ENCODE measurements at regions of chr1 and their contacts with region 1.

Region 1: GRCh38 chr1:201895913-201896807 is 7.5 kb downstream of the SHISA4 start:
- DNase-seq: peak; percentile 88 to 94
- ATAC-seq: peak; percentile 91 to 96
- H3K4me3 ChIP-seq: no peak overlapping the region
- H3K27ac ChIP-seq: peak overlapping the region; percentile 60 to 73; a peak in 5 of 6 replicates
- H3K4me1 ChIP-seq: peaks cover 3% of the 10 kb centered on the region; the same call in 1 of the 3 replicates
- CTCF ChIP-seq: peak; percentile 98
- EP300 ChIP-seq: no peak
- POLR2A ChIP-seq: no peak
- RAD21 ChIP-seq: peak; percentile 99

Region 2: GRCh38 chr1:201678264-201679101 is 217.7 kb before region 1 on chr1:
- CTCF ChIA-PET with region 1: no interaction called
- POLR2A ChIA-PET with region 1: no interaction called
- DNase-seq: no peak
- ATAC-seq: no peak
- H3K4me3 ChIP-seq: no peak overlapping the region
- H3K27ac ChIP-seq: no peak overlapping the region
- H3K4me1 ChIP-seq: peaks cover 25% of the 10 kb centered on the region
- CTCF ChIP-seq: no peak
- EP300 ChIP-seq: no peak
- POLR2A ChIP-seq: no peak
- RAD21 ChIP-seq: no peak

Region 3: GRCh38 chr1:201859424-201859823 is 36.7 kb before region 1 on chr1:
- CTCF ChIA-PET with region 1: interaction called, 19 read pairs
- POLR2A ChIA-PET with region 1: no interaction called
- DNase-seq: no peak
- ATAC-seq: no peak
- H3K4me3 ChIP-seq: no peak overlapping the region
- H3K27ac ChIP-seq: no peak overlapping the region
- H3K4me1 ChIP-seq: no peaks in the 10 kb centered on the region
- CTCF ChIP-seq: no peak
- EP300 ChIP-seq: no peak
- POLR2A ChIP-seq: no peak
- RAD21 ChIP-seq: no peak

Region 4: DNA sequence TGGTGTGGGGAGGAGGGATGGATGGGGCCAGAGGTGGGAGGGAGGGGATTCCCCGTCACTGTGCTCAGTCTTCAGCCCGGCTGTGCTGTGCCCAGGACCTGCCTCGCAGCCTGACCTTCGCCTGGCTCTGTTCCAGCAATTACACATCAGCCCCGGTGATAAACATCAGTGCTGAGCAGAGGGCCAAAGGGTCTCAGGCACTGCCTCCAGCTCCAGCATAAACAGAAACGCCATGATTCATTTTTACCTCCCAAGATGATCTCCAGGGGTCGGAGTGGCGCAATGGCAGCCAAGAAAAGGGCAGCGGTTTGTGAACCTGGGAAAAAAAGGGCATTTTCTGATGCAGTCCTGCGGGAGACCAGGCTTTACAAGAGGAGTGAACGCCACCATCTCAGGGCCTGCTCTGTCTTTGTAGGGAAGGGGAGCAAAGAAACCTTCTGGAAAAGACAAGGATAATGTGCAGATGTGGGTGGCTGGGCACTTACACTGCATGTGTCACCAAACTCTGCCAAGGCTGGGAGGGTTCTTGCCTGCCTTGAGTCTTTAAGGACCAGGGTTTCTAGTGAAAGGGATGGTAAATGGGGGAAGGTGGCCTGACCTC is 20.6 kb after region 1 on chr1:
- CTCF ChIA-PET with region 1: interaction called, 303 read pairs
- POLR2A ChIA-PET with region 1: no interaction called
- DNase-seq: peak; percentile 67 to 85
- ATAC-seq: peak; percentile 85 to 86
- H3K4me3 ChIP-seq: no peak overlapping the region
- H3K27ac ChIP-seq: peak overlapping the region; percentile 73 to 82
- H3K4me1 ChIP-seq: peaks cover 26% of the 10 kb centered on the region
- CTCF ChIP-seq: no peak
- EP300 ChIP-seq: peak; percentile 49 to 72; a peak in 3 of 5 replicates
- POLR2A ChIP-seq: no peak
- RAD21 ChIP-seq: peak in 1 of 2 experiments; percentile 31; a peak in 2 of 5 replicates

Region 5: GRCh38 chr1:201946224-201946908 is 50.2 kb after region 1 on chr1 and contains the start of gene LMOD1:
- CTCF ChIA-PET with region 1: interaction called, 124 read pairs
- POLR2A ChIA-PET with region 1: no interaction called
- DNase-seq: no peak
- ATAC-seq: peak in 1 of 2 experiments; percentile 69; a peak in 3 of 6 replicates
- H3K4me3 ChIP-seq: no peak within 1 kb of the TSS
- H3K27ac ChIP-seq: no peak within 1 kb of the TSS
- H3K4me1 ChIP-seq: no peaks in the 10 kb centered on the region
- CTCF ChIP-seq: no peak
- EP300 ChIP-seq: no peak
- POLR2A ChIP-seq: no peak
- RAD21 ChIP-seq: no peak
- polyA plus RNA-seq, gene LMOD1: 0.03 TPM in 1 of 2 replicates, not detected in the other

Region 6: DNA sequence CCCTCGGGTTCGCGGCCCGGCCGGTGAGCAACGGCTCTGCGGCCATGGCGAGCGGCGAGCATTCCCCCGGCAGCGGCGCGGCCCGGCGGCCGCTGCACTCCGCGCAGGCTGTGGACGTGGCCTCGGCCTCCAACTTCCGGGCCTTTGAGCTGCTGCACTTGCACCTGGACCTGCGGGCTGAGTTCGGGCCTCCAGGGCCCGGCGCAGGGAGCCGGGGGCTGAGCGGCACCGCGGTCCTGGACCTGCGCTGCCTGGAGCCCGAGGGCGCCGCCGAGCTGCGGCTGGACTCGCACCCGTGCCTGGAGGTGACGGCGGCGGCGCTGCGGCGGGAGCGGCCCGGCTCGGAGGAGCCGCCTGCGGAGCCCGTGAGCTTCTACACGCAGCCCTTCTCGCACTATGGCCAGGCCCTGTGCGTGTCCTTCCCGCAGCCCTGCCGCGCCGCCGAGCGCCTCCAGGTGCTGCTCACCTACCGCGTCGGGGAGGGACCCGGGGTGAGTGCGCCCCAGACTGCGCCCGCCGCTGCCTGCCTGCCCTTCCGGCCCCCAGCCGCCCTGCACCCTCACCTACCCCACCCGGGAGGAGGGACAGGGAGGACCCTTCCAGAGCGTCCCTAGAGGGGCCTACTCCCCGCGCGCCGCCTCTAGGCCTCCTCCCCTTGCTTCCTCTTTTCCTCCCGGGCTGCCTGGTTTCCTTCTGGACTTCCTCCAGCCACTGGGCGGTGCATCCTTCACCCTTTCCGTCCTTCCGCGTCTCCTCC is 86.6 kb after region 1 on chr1 and contains the start of gene RNPEP:
- CTCF ChIA-PET with region 1: interaction called, 855 read pairs
- POLR2A ChIA-PET with region 1: no interaction called
- DNase-seq: peak; percentile 82 to 88
- ATAC-seq: peak; percentile 91 to 93
- H3K4me3 ChIP-seq: peak within 1 kb of the TSS; percentile 60
- H3K27ac ChIP-seq: peak within 1 kb of the TSS; percentile 88 to 97
- H3K4me1 ChIP-seq: peaks cover 14% of the 10 kb centered on the region
- CTCF ChIP-seq: no peak; the same call in none of the 3 replicates
- EP300 ChIP-seq: no peak
- POLR2A ChIP-seq: peak; percentile 88
- RAD21 ChIP-seq: no peak
- polyA plus RNA-seq, gene RNPEP: 80.4 and 87.6 TPM in 2 replicates

Region 7: GRCh38 chr1:202112839-202113672 is 216.9 kb after region 1 on chr1:
- CTCF ChIA-PET with region 1: interaction called, 30 read pairs
- POLR2A ChIA-PET with region 1: no interaction called
- DNase-seq: peak; percentile 62 to 85
- ATAC-seq: peak; percentile 76 to 80
- H3K4me3 ChIP-seq: no peak overlapping the region
- H3K27ac ChIP-seq: peak overlapping the region; percentile 88 to 94
- H3K4me1 ChIP-seq: peaks cover 73% of the 10 kb centered on the region
- CTCF ChIP-seq: no peak
- EP300 ChIP-seq: no peak; a peak in 1 of 5 replicates
- POLR2A ChIP-seq: no peak
- RAD21 ChIP-seq: peak; percentile 24 to 25; a peak in 3 of 5 replicates

Region 8: DNA sequence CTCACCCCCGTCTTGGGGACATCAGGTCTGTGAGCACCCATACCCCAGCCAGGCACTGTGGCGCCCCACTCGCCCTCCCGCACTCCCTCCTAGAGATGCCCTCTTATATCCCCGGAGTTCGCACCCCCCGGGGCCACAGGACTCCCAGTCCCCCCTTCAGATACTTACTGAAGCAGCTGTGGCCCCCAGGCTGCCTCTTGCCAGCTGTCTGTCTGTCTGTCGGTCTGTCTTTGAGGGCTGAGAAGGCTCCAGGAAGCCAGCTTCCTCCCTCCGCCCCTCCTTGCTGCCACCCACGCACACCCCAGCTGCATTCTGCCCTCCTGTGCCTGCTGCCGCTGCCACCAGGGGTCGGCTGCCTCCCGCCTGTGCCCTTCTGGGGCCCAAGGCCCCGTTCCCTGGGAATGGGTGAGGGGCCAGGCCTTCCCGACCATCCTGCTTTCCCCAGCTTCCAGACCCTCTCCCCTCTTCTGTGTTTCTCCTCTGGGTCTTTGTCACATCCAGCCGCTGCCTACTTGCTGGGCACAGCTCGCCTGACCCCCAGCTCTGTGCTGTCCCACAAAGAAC is 264.3 kb after region 1 on chr1 and contains the start of gene PTPN7:
- CTCF ChIA-PET with region 1: no interaction called
- POLR2A ChIA-PET with region 1: no interaction called
- DNase-seq: no peak
- ATAC-seq: no peak; a peak in 2 of 6 replicates
- H3K4me3 ChIP-seq: no peak within 1 kb of the TSS
- H3K27ac ChIP-seq: peak within 1 kb of the TSS in 1 of 2 experiments; percentile 19; a peak in 1 of 6 replicates
- H3K4me1 ChIP-seq: peaks cover 16% of the 10 kb centered on the region
- CTCF ChIP-seq: no peak
- EP300 ChIP-seq: no peak
- POLR2A ChIP-seq: no peak
- RAD21 ChIP-seq: no peak
- polyA plus RNA-seq, gene PTPN7: 0.08 TPM in 1 of 2 replicates, not detected in the other

Measured in A549 (cell line).